ENCODE measurements at regions of chr4 and their contacts with region 1.

Region 1: GRCh38 chr4:139416073-139416673 is 37.7 kb upstream of the RAB33B start:
- DNase-seq: no peak
- ATAC-seq: peak in 1 of 4 donors; percentile 36
- H3K4me3 ChIP-seq: no peak overlapping the region
- H3K27ac ChIP-seq: no peak overlapping the region
- H3K4me1 ChIP-seq: peaks cover 0 to 18% (median 5%) of the 10 kb centered on the region in 12 donors
- H3K27me3 ChIP-seq: no peaks in the 10 kb centered on the region
- CTCF ChIP-seq: peak; percentile 60 to 84 (median 72)
- POLR2A ChIP-seq: no peak

Region 2: GRCh38 chr4:139642364-139642763 is 226.2 kb after region 1 on chr4:
- intact Hi-C with region 1: loop called in 2 of 10 experiments (anchors 10 kb)
- DNase-seq: no peak
- ATAC-seq: no peak
- H3K4me3 ChIP-seq: no peak overlapping the region
- H3K27ac ChIP-seq: no peak overlapping the region
- H3K4me1 ChIP-seq: no peaks in the 10 kb centered on the region
- H3K27me3 ChIP-seq: no peaks in the 10 kb centered on the region
- CTCF ChIP-seq: no peak
- POLR2A ChIP-seq: no peak

Region 3: DNA sequence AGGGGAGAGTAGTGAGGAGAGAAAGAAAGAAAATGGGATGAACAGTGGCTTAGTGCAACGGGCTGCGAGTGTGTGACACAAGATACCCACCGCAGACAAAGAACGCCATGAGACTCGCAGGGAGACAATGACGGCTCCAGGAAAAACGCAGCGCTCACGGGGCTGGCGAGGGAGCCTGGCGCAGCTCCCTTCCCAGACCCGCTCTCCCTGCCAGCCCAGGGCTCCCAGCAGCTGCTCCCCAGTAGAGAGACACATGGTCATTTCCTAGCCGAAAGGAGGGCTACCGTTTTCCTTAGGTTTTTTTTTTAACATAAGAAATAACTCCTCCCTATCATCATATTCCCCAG is 588.3 kb after region 1 on chr4:
- intact Hi-C with region 1: no loop called
- DNase-seq: peak; percentile 57 to 72 (median 63)
- ATAC-seq: peak; percentile 88 to 96 (median 92)
- H3K4me3 ChIP-seq: peak overlapping the region; percentile 9 to 56 (median 46)
- H3K27ac ChIP-seq: peak overlapping the region in 8 of 12 donors; percentile 12 to 67 (median 49)
- H3K4me1 ChIP-seq: peaks cover 0 to 28% (median 6%) of the 10 kb centered on the region in 12 donors
- H3K27me3 ChIP-seq: no peaks in the 10 kb centered on the region
- CTCF ChIP-seq: no peak
- POLR2A ChIP-seq: no peak